ENCODE measurements at regions of chr7 and their contacts with region 1.

Region 1: DNA sequence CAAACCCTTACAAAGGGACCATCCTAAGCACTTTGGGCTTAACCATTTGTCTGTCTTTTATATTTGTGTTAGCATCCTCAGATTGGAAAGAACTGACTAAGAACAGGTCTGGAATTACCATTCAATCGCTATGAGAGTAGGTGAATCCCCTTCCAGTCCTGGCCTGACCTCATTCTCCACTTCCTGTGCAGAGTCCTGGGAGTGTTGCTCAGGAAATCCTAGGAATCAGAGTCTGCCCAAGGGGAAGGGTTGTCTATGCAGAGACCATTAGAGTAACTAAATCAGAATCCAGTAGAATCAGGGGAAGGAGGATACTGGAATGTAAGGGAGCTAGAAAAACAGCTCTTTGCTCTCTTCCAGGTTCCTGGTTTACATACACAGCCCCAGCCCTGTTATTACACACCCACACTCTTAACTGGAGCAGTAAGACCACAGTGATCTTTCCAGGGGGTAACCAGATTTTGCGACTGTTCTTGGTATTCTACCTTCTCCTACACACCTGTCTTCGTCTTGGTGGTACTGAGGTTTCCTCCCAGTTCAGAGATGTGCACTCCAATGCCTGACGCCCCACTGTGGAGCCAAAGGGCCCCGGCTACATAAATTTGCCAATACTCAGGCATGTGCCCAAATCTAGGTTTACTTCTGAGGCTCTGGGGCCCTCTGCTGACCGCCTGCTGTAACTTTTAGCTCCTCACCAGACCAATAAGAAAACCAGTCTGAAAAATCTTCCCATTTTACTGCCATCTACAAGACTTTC is 103.7 kb downstream of the RNF216 start:
- DNase-seq: no peak
- ATAC-seq: peak; percentile 83
- H3K4me3 ChIP-seq: no peak overlapping the region
- H3K27ac ChIP-seq: no peak overlapping the region
- H3K4me1 ChIP-seq: peaks cover 39% of the 10 kb centered on the region
- H3K27me3 ChIP-seq: no peaks in the 10 kb centered on the region
- CTCF ChIP-seq: peak; percentile 69

Region 2: GRCh38 chr7:5477723-5478531 is 199.8 kb before region 1 on chr7:
- intact Hi-C with region 1: no loop called
- DNase-seq: no peak
- ATAC-seq: peak; percentile 79
- H3K4me3 ChIP-seq: peak overlapping the region; percentile 43
- H3K27ac ChIP-seq: no peak overlapping the region
- H3K4me1 ChIP-seq: peaks cover 8% of the 10 kb centered on the region
- H3K27me3 ChIP-seq: no peaks in the 10 kb centered on the region
- CTCF ChIP-seq: peak; percentile 30

Region 3: GRCh38 chr7:5494683-5495561 is 182.8 kb before region 1 on chr7:
- intact Hi-C with region 1: loop called (anchors 5 kb)
- DNase-seq: peak; percentile 89
- ATAC-seq: peak; percentile 90
- H3K4me3 ChIP-seq: peak overlapping the region; percentile 24
- H3K27ac ChIP-seq: no peak overlapping the region
- H3K4me1 ChIP-seq: peaks cover 21% of the 10 kb centered on the region
- H3K27me3 ChIP-seq: no peaks in the 10 kb centered on the region
- CTCF ChIP-seq: peak; percentile 95

Measured in upper lobe of right lung (tissue), 1 donor.